ENCODE measurements at regions of chr13 and their contacts with region 1.

Region 1: DNA sequence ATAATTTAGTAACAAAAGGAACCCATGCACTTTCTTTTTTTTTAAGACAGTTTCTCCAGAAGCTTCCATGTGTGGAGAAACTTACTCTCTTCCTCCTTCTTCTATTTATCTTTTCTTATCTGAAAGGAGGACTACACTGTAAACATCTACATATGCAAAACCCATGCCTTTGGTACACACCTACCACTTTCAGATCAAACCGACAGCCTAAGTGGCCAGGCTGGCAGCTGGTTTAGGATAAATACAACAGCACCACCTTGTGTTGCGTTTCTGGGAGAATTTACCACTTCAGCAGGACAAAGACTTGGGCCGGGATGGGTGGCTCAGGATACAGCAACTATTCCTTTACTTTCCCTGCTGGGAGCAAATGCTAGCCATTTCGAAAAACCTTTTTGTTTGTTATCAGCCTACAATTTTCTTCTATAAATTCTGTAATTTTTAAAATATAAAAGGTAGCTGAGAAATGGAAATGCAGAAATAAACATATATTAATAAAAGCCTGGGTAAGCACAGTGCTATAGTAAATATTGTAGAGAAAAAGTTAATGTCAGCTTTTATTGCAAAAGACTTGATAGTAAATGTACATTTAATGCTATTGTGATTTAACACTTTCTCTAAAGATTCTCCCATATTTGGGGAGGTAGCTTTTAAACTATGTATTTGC is 94.0 kb upstream of the RFC3 start:
- DNase-seq: peak; percentile 86
- ATAC-seq: peak; percentile 83
- H3K4me3 ChIP-seq: no peak overlapping the region
- H3K27ac ChIP-seq: peak overlapping the region; percentile 78
- H3K4me1 ChIP-seq: peaks cover 40% of the 10 kb centered on the region
- H3K27me3 ChIP-seq: no peaks in the 10 kb centered on the region
- CTCF ChIP-seq: peak; percentile 65 to 85 (median 74); a peak in 5 of 6 replicates
- EP300 ChIP-seq: 0 out of 4 replicates have a peak, but pooled peaks of 1 of the 2 experiments have one; percentile 34
- POLR2A ChIP-seq: no peak
- RAD21 ChIP-seq: peak; percentile 97

Region 2: GRCh38 chr13:33204130-33204927 is 519.6 kb before region 1 on chr13:
- CTCF ChIA-PET with region 1: interaction called, 13 read pairs
- POLR2A ChIA-PET with region 1: no interaction called
- RAD21 ChIA-PET with region 1: interaction called, 7 read pairs
- SMC1A ChIA-PET with region 1: interaction called, 3 read pairs
- in situ Hi-C with region 1: no loop called
- intact Hi-C with region 1: loop called (anchors 2 kb)
- DNase-seq: peak; percentile 78
- ATAC-seq: peak; percentile 40
- H3K4me3 ChIP-seq: peak overlapping the region; percentile 74
- H3K27ac ChIP-seq: peak overlapping the region; percentile 95
- H3K4me1 ChIP-seq: peaks cover 42% of the 10 kb centered on the region
- H3K27me3 ChIP-seq: no peaks in the 10 kb centered on the region
- CTCF ChIP-seq: no peak
- EP300 ChIP-seq: no peak; a peak in 3 of 4 replicates
- POLR2A ChIP-seq: no peak
- RAD21 ChIP-seq: no peak

Region 3: GRCh38 chr13:33542283-33543088 is 181.4 kb before region 1 on chr13:
- CTCF ChIA-PET with region 1: interaction called, 90 read pairs
- POLR2A ChIA-PET with region 1: interaction called, 20 read pairs
- RAD21 ChIA-PET with region 1: interaction called, 132 read pairs
- SMC1A ChIA-PET with region 1: interaction called, 134 read pairs
- in situ Hi-C with region 1: loop called (anchors 5 kb)
- intact Hi-C with region 1: loop called (anchors 1 kb)
- DNase-seq: peak; percentile 94
- ATAC-seq: peak; percentile 90
- H3K4me3 ChIP-seq: peak overlapping the region; percentile 69
- H3K27ac ChIP-seq: peak overlapping the region; percentile 97
- H3K4me1 ChIP-seq: peaks cover 12% of the 10 kb centered on the region
- H3K27me3 ChIP-seq: no peaks in the 10 kb centered on the region
- CTCF ChIP-seq: peak; percentile 86 to 99 (median 88)
- EP300 ChIP-seq: no peak; a peak in 1 of 4 replicates
- POLR2A ChIP-seq: peak; percentile 70
- RAD21 ChIP-seq: peak; percentile 90

Region 4: GRCh38 chr13:33686811-33687535 is 36.9 kb before region 1 on chr13:
- CTCF ChIA-PET with region 1: interaction called, 93 read pairs
- POLR2A ChIA-PET with region 1: no interaction called
- RAD21 ChIA-PET with region 1: interaction called, 82 read pairs
- SMC1A ChIA-PET with region 1: interaction called, 43 read pairs
- in situ Hi-C with region 1: loop called (anchors 5 kb)
- intact Hi-C with region 1: no loop called
- DNase-seq: no peak
- ATAC-seq: no peak
- H3K4me3 ChIP-seq: no peak overlapping the region
- H3K27ac ChIP-seq: no peak overlapping the region
- H3K4me1 ChIP-seq: no peaks in the 10 kb centered on the region
- H3K27me3 ChIP-seq: no peaks in the 10 kb centered on the region
- CTCF ChIP-seq: no peak
- EP300 ChIP-seq: no peak
- POLR2A ChIP-seq: no peak
- RAD21 ChIP-seq: no peak

Region 5: GRCh38 chr13:33761740-33762139 is 37.8 kb after region 1 on chr13:
- CTCF ChIA-PET with region 1: interaction called, 12 read pairs
- POLR2A ChIA-PET with region 1: interaction called, 3 read pairs
- RAD21 ChIA-PET with region 1: interaction called, 6 read pairs
- SMC1A ChIA-PET with region 1: interaction called, 12 read pairs
- in situ Hi-C with region 1: no loop called
- intact Hi-C with region 1: no loop called
- DNase-seq: no peak
- ATAC-seq: no peak
- H3K4me3 ChIP-seq: no peak overlapping the region
- H3K27ac ChIP-seq: no peak overlapping the region
- H3K4me1 ChIP-seq: peaks cover 15% of the 10 kb centered on the region
- H3K27me3 ChIP-seq: no peaks in the 10 kb centered on the region
- CTCF ChIP-seq: no peak
- EP300 ChIP-seq: no peak
- POLR2A ChIP-seq: no peak
- RAD21 ChIP-seq: no peak

Region 6: GRCh38 chr13:34076943-34077703 is 353.2 kb after region 1 on chr13:
- CTCF ChIA-PET with region 1: interaction called, 8 read pairs
- POLR2A ChIA-PET with region 1: no interaction called
- RAD21 ChIA-PET with region 1: interaction called, 3 read pairs
- SMC1A ChIA-PET with region 1: interaction called, 9 read pairs
- in situ Hi-C with region 1: no loop called
- intact Hi-C with region 1: loop called (anchors 10 kb)
- DNase-seq: no peak
- ATAC-seq: peak; percentile 62
- H3K4me3 ChIP-seq: no peak overlapping the region
- H3K27ac ChIP-seq: no peak overlapping the region
- H3K4me1 ChIP-seq: no peaks in the 10 kb centered on the region
- H3K27me3 ChIP-seq: no peaks in the 10 kb centered on the region
- CTCF ChIP-seq: peak; percentile 42 to 56 (median 51); a peak in 5 of 6 replicates
- EP300 ChIP-seq: no peak
- POLR2A ChIP-seq: no peak
- RAD21 ChIP-seq: peak; percentile 89